ENCODE measurements at regions of chr6 and their contacts with region 1.

Region 1: DNA sequence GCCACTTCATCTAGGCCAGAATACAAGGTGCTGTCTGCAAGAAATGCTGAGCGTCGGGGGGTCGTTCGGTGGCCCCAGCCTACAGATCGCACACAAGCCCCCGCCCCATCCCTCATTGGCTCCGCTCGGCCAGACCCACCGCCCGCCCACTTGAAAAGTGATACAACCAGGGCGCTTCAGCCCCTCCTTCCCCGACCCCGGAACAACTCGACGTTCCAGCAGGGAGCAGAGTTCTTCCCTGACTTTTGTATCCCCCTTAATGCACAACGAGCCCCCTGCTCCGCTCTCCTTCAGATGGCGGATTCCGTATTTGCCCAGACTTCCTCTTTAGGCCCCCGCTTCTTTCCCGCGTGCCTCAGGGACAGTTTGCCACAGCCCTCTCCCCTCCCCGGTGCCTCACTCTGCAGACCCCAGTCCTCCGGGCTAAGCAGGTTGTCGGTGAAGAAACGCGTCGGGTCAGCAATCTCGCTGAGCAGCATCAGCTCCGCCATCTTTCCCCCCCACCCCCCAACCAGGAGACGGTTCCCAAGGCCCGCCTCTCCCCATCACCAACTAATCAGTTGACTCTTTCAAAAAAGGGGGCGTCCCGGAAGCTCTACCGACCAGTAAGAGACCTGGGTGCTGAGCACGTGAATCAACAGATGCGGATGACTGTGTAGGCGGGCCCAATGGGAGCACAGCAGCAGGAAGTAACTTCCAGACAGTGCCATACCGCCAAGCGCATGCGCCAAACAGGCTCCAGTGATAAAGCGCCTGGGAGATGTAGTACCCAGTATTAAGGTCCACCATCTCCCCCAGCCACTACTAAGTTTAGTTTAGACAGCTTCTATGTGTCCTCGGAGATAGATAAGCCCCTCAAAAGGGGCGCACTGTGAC is at the start of gene ATF6B:
- DNase-seq: peak; percentile 97 to 100 (median 99)

Region 2: DNA sequence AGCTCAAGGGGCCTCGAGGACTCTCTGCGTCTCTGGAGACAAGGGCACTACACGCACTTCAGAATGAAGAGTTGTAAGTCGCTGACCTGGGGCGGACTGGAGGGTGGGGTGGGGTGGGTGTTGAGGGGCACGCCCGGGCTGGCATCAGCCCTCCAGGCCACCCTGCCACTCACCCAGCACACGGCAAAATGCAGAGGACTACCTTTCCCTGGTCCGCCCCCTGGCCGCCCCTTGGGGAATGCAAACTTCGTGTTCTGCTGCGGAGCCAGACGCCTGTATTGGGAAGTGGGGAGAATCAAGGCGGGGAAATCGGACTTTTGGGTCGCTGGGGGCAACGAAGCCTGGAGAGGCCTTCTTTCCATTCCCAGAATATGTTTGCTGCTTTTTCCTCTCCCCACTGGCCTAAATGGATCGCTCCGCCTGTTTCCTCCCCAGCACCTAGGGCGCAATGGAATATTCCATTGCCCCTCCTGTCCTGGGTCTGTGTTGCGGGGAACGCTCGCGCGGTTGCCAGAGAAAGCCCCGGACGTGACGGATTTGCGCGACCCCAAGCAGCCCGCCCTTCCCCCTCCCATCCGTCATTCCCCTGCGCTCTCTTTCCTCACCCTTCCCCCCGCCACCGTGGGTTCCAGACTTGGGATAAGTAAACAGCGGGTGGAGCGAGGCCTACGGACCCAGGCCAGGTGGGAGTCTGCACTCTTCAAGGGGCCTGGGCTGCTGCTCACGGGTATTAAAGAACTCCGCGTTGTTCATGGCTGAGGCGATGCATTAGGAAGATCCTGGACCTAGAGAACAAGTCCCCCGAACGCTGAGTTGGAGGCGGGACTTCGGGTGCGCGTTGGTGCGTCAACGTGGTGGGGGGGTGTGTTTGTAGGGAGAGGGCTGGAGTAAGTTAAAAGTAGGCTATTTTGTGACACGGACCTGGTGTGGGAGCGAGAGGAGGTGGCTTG is 25.9 kb after region 1 on chr6 and contains the start of gene PPT2:
- intact Hi-C with region 1: loop called (anchors 1 kb)
- DNase-seq: peak; percentile 81 to 98 (median 90)

Region 3: DNA sequence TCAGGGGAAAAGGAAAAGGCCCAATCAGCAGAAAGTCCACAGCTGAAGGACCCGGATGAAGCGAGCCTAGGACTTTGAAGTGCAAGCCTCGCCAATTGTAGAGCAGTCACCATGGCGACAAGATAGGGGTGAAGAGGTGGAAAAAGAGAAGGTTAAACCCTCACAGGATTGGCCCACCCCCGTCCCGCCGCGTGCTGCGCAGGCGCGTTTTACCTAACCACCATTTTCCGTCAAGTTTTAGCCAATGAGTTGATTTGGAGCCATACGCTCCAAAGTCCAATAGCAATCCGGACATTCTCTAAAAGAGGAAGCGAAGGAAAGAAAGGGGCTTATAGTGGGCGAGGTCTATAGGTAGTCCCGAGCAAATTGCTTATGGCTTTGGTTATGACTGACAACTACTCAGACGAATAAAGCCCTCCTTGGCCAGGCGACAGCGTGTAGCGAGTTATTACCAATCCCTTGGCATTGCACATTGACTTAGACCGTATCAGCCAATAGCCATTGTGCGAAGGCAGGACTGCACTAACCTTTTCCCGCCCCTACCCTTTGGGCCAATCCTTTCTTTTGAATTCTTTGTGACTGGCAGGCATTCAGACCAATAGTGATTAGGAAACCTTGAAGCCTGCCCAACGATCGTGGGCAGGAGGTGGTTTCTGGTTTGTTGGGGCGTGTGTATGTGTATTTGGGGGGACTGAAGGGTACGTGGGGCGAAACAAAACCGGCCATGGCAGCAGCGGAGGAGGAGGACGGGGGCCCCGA is 50.0 kb after region 1 on chr6 and contains the start of gene RNF5:
- intact Hi-C with region 1: loop called (anchors 5 kb)
- DNase-seq: peak; percentile 86 to 99 (median 94)

Region 4: DNA sequence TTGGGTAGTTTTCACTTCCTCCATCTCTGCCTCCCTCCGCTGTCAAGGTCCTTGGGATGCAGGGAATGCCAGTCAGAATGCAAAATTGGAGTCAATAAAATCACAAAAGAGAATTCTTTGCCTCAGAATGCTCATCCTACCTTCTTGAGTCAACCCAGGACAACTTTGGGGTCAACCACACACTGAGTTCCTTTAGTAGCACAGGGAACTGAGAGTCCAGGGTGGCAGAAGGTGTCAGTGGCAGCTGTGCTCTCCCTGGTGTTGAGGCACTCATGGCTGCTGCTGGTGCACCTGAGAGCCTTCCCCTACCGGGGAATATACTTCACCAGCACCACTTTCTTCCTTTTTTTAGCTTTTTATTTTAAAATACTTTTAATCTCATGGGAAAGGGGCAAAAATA is 96.7 kb after region 1 on chr6:
- intact Hi-C with region 1: no loop called
- DNase-seq: no peak